OCI-LY7 (cell line): ENCODE measurements at regions of chr20 and their contacts with region 1.

Region 1: GRCh38 chr20:15812696-15813095 is 760.6 kb downstream of the KIF16B start:
- DNase-seq: no peak
- H3K4me3 ChIP-seq: no peak overlapping the region
- H3K27ac ChIP-seq: no peak overlapping the region
- H3K4me1 ChIP-seq: no peaks in the 10 kb centered on the region
- CTCF ChIP-seq: no peak

Region 2: DNA sequence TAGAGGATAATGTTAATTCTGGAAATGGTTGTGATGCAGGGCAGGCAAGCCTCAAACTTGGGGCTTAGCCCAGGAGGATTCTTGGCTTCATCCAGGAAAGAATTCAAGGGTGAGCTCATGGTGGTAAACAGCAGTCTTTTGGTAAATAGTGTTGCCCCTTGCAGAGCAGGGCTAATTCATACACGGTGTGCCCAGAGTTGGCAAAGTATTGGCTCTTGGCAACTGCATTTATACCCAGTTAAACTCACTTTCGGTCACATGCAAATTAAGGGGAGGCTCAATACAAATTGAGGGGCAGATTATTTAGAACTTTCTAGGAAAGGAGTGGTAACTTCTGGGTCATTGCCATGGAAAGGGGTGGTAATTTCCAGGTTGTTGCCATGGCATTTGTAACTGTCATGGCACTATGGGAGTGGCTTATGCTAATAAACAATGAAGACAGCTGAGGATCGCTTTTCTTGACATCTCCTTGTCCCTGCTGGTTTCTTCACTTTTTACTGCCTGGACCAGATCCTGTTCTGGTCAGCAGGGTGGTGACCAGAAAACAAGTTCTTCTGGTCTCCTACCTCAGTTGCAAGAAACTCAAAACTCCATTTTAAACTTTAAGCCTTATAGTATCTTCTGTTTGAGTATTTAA is 931.6 kb after region 1 on chr20:
- CTCF ChIA-PET with region 1: no interaction called
- POLR2A ChIA-PET with region 1: interaction called, 10 read pairs
- intact Hi-C with region 1: no loop called
- DNase-seq: no peak
- H3K4me3 ChIP-seq: no peak overlapping the region
- H3K27ac ChIP-seq: no peak overlapping the region
- H3K4me1 ChIP-seq: no peaks in the 10 kb centered on the region
- CTCF ChIP-seq: no peak